HepG2 (cell line): ENCODE measurements at regions of chr20 and their contacts with region 1.

Region 1: GRCh38 chr20:50750145-50750671 is 18.8 kb downstream of the PARD6B start:
- DNase-seq: no peak
- ATAC-seq: no peak
- H3K4me3 ChIP-seq: no peak overlapping the region
- H3K27ac ChIP-seq: no peak overlapping the region
- H3K4me1 ChIP-seq: peaks cover 34% of the 10 kb centered on the region
- H3K27me3 ChIP-seq: no peaks in the 10 kb centered on the region
- CTCF ChIP-seq: no peak
- EP300 ChIP-seq: no peak
- POLR2A ChIP-seq: no peak
- RAD21 ChIP-seq: no peak

Region 2: DNA sequence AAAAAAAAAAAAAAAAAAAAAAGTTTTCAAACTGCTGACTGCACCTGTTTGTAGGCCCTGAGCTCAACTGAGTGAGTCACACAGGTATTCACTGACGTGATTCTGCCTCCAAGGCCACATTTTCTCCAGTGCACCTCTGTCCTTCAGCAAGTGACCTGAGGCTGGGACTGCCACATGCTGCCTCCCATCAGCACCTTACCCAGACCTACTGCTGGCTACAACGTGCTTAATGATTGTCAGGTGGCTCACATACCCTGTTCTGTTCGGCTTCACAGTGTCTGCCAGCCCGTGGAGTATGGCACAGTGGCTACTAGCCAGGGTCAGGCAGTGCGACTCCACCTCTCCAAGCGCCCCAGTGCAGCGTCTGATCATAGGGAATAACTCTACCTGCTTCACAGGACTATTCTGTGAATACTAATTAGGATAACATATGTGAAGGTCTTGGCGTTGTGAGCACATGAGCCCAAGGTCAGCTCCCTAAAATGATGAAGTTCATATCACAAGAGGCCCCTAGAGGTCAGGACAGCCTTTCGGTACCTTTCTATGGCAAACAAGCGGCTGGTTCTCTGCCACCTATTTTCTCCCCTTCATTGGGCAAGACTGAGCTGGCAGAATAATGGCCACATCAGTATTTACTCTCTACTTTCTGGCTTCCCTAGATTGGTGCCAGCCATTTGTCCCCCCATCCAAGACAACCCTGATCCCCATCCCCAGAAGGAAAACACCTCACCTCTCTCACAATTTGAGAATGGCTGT is 86.9 kb before region 1 on chr20:
- CTCF ChIA-PET with region 1: interaction called, 11 read pairs
- POLR2A ChIA-PET with region 1: interaction called, 7 read pairs
- in situ Hi-C with region 1: no loop called
- intact Hi-C with region 1: loop called (anchors 1 kb)
- DNase-seq: peak; percentile 84
- ATAC-seq: peak; percentile 74
- H3K4me3 ChIP-seq: peak overlapping the region in 1 of 3 experiments; percentile 55; a peak in 2 of 6 replicates
- H3K27ac ChIP-seq: no peak overlapping the region
- H3K4me1 ChIP-seq: peaks cover 88% of the 10 kb centered on the region
- H3K27me3 ChIP-seq: peaks cover 2 to 14% of the 10 kb centered on the region in 2 experiments; a peak in 1 of 5 replicates
- CTCF ChIP-seq: peak; percentile 83
- EP300 ChIP-seq: no peak
- POLR2A ChIP-seq: no peak
- RAD21 ChIP-seq: peak; percentile 87

Region 3: DNA sequence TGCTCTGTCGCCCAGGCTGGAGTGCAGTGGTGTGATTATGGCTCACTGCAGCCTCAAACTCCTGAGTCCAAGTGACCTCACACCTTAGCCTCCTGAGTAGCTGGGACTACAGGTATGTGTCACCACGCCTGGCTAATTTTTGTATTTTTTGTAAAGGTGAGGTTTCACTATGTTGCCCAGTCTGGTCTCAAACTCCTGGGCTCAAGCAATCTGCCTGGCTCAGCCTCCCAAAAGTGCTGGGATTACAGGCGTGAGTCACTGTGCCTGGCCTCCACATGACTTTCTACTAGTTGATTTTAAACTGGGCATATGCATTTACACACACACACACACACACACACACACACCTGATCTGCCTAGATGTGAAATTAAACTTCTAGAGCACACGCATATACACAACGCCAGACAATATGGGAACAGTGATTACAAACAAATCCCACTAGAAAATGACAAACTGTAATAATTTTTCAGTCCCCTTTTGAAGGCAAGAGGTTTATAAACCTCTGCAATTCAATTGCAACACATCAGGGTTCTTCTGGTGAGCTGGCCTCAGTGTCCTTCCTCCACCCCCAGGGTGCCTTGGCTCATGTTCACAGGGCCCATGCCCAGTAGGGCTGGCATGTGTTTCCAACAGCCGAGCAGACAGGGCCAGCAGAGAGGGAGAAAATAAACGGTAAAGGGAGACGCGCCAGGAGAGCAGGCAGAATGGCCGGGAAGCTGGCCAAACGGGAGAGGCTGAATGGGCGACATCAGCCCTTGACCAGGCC is 12.4 kb after region 1 on chr20:
- CTCF ChIA-PET with region 1: no interaction called
- POLR2A ChIA-PET with region 1: interaction called, 15 read pairs
- in situ Hi-C with region 1: no loop called
- intact Hi-C with region 1: no loop called
- DNase-seq: peak; percentile 34
- ATAC-seq: no peak
- H3K4me3 ChIP-seq: no peak overlapping the region
- H3K27ac ChIP-seq: peak overlapping the region; percentile 66
- H3K4me1 ChIP-seq: peaks cover 73% of the 10 kb centered on the region
- H3K27me3 ChIP-seq: no peaks in the 10 kb centered on the region
- CTCF ChIP-seq: no peak
- EP300 ChIP-seq: no peak
- POLR2A ChIP-seq: no peak
- RAD21 ChIP-seq: no peak

Region 4: DNA sequence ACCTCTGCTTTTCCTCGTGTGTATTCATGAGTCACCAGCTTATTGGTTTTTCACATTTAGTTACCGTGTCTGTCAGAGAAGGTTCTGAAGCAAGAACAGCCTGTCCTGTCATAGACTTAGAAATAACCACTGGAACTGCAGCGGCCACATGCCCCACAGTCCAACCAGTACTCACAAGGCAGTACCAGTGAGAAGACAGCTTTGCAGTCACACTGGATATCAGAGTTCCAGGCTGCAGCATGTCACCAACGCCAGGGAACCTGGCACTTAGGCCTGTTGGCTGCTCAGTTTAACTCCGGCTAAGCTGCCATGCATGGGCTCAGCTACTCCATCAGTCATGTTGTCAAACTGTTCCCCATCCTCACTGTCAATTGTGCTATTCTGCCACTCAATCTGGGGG is 140.9 kb after region 1 on chr20:
- CTCF ChIA-PET with region 1: no interaction called
- POLR2A ChIA-PET with region 1: no interaction called
- in situ Hi-C with region 1: no loop called
- intact Hi-C with region 1: no loop called
- DNase-seq: no peak
- ATAC-seq: no peak
- H3K4me3 ChIP-seq: no peak overlapping the region
- H3K27ac ChIP-seq: no peak overlapping the region
- H3K4me1 ChIP-seq: peaks cover 17% of the 10 kb centered on the region
- H3K27me3 ChIP-seq: no peaks in the 10 kb centered on the region
- CTCF ChIP-seq: no peak
- EP300 ChIP-seq: no peak
- POLR2A ChIP-seq: peak in 1 of 2 experiments; percentile 41; a peak in 1 of 4 replicates
- RAD21 ChIP-seq: no peak

Region 5: GRCh38 chr20:51013577-51014330 is 263.5 kb after region 1 on chr20:
- CTCF ChIA-PET with region 1: no interaction called
- POLR2A ChIA-PET with region 1: no interaction called
- in situ Hi-C with region 1: no loop called
- intact Hi-C with region 1: no loop called
- DNase-seq: no peak
- ATAC-seq: no peak
- H3K4me3 ChIP-seq: no peak overlapping the region
- H3K27ac ChIP-seq: no peak overlapping the region
- H3K4me1 ChIP-seq: no peaks in the 10 kb centered on the region
- H3K27me3 ChIP-seq: peaks cover 0 to 42% of the 10 kb centered on the region in 2 experiments; a peak in 4 of 5 replicates
- CTCF ChIP-seq: no peak
- EP300 ChIP-seq: no peak
- POLR2A ChIP-seq: no peak
- RAD21 ChIP-seq: no peak